ENCODE measurements at regions of chr6 and their contacts with region 1.

Region 1: DNA sequence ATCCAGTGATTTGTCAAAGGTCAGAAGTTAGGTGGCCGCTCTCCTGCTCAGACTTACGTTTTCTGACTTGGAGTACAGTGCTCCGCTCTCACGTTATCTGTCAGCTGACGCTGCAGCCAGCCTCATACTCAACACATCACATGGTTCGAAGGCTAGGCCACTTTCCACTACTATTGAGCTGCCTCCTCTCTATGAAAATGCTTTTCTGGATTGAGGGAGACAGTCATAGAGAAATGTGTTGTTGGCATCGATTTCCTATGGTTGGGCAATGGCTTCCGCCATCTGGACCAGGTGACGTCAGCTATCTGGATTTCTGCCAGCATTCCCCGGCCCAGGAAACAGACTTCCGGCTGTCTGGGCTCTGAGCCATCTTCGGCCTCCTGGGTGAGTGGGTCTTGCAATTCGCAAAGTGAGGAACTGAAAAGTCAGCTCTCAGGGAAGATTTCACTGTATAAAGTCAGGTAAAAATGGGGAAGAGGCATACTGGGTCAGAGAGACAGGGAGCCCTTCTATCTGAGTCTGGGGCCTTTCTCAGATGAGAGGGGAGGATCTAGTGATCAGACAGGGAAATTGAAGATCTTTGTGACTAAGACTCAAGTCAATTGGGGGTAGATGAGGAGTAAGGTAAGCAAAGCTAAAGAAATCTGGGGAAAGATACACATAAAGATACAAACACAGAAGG is 37.5 kb upstream of the IER3 start:
- DNase-seq: peak; percentile 88 to 97 (median 91)
- ATAC-seq: peak; percentile 79
- H3K4me3 ChIP-seq: peak overlapping the region; percentile 21
- H3K27ac ChIP-seq: peak overlapping the region; percentile 91
- H3K4me1 ChIP-seq: peaks cover 45 to 54% of the 10 kb centered on the region in 2 experiments
- H3K27me3 ChIP-seq: no peaks in the 10 kb centered on the region
- CTCF ChIP-seq: no peak
- EP300 ChIP-seq: peak; percentile 88
- POLR2A ChIP-seq: peak; percentile 78
- RAD21 ChIP-seq: peak; percentile 3 to 31; a peak in 1 of 4 replicates

Region 2: DNA sequence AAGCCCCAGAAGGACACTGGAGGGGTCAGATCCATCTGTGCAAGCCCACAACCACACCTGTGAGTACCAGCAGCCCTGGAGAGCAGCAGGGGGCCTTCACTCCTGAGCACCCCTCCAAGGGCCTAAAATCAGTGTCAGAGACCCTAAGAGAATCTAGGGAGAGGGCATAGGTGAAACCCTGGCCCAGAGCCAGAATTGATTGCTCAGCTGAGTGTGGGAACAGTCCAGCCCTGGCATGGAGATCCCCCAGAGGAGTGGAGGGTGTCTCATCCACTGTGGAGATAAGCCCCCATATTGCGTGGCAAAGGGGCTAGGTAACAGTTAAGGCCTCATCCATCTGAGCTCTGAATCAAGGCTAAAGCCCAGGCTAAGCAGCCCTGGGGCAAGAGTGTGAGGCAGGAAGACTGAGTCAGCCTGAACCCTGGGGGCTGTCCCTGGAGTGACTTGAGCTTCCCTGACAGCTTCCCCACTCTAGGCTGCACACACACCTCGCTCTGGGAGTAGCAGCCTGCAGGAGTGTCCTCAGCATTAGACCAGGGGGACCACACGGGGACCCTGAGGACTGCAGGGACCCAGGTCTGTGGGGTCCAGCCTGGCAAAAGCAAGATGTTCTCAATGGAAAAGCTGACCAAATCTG is 1250.3 kb before region 1 on chr6:
- CTCF ChIA-PET with region 1: no interaction called
- POLR2A ChIA-PET with region 1: no interaction called
- in situ Hi-C with region 1: no loop called
- intact Hi-C with region 1: no loop called
- DNase-seq: no peak
- ATAC-seq: no peak
- H3K4me3 ChIP-seq: no peak overlapping the region
- H3K27ac ChIP-seq: no peak overlapping the region
- H3K4me1 ChIP-seq: no peaks in the 10 kb centered on the region; a peak in 1 of 5 replicates
- H3K27me3 ChIP-seq: peaks cover 0 to 13% of the 10 kb centered on the region in 2 experiments; a peak in 3 of 5 replicates
- CTCF ChIP-seq: no peak
- EP300 ChIP-seq: no peak
- POLR2A ChIP-seq: no peak
- RAD21 ChIP-seq: no peak

Region 3: DNA sequence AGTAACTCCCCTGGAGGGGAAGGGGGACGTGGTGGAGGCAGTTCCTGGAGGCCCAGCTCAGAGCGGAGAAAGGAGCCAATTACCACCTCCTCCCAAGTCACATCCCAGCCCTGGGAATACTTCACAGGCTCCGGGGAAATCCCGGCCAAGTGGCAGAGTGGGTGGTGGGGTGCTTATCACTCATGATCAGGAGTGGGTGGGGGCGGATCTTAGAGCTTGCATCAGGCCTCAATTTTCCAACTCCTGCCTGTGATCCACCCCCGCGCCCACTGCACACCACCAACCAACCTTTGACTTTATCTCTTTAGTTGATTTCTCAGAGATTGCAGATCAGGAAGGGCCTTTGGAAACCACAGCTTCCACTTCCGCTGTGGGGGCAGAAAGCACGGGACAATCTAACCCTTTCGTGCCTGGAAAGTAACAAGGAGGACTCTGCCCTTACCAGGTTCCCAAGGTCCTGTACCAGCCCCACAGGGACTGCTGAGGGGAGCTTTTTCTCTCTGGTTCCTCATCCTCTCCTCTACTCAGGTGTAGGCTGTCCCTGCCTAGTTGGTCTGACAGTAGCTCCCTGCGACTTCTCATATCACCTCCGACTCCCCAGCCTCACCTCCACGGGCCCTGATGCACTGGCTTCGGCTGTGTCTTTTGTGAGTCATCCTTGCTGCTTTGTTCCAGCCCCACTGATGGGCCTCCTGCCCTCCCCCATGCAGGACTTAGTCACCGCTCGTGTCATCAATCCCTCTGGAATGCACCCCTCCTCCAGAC is 12.6 kb before region 1 on chr6:
- CTCF ChIA-PET with region 1: no interaction called
- POLR2A ChIA-PET with region 1: interaction called, 19 read pairs
- in situ Hi-C with region 1: no loop called
- intact Hi-C with region 1: no loop called
- DNase-seq: peak; percentile 90 to 93 (median 92)
- ATAC-seq: peak; percentile 90
- H3K4me3 ChIP-seq: peak overlapping the region; percentile 16; the same call in 1 of the 2 replicates
- H3K27ac ChIP-seq: peak overlapping the region; percentile 92
- H3K4me1 ChIP-seq: peaks cover 36 to 49% of the 10 kb centered on the region in 2 experiments
- H3K27me3 ChIP-seq: no peaks in the 10 kb centered on the region; a peak in 1 of 5 replicates
- CTCF ChIP-seq: no peak
- EP300 ChIP-seq: peak; percentile 88
- POLR2A ChIP-seq: no peak; the same call in 1 of the 2 replicates
- RAD21 ChIP-seq: peak; percentile 16 to 39

Region 4: GRCh38 chr6:30793521-30794194 is 11.8 kb after region 1 on chr6:
- CTCF ChIA-PET with region 1: no interaction called
- POLR2A ChIA-PET with region 1: interaction called, 16 read pairs
- in situ Hi-C with region 1: no loop called
- intact Hi-C with region 1: no loop called
- DNase-seq: no peak
- ATAC-seq: peak; percentile 44
- H3K4me3 ChIP-seq: no peak overlapping the region
- H3K27ac ChIP-seq: peak overlapping the region; percentile 66
- H3K4me1 ChIP-seq: peaks cover 5 to 27% of the 10 kb centered on the region in 2 experiments
- H3K27me3 ChIP-seq: no peaks in the 10 kb centered on the region
- CTCF ChIP-seq: no peak
- EP300 ChIP-seq: no peak
- POLR2A ChIP-seq: no peak
- RAD21 ChIP-seq: no peak

Region 5: DNA sequence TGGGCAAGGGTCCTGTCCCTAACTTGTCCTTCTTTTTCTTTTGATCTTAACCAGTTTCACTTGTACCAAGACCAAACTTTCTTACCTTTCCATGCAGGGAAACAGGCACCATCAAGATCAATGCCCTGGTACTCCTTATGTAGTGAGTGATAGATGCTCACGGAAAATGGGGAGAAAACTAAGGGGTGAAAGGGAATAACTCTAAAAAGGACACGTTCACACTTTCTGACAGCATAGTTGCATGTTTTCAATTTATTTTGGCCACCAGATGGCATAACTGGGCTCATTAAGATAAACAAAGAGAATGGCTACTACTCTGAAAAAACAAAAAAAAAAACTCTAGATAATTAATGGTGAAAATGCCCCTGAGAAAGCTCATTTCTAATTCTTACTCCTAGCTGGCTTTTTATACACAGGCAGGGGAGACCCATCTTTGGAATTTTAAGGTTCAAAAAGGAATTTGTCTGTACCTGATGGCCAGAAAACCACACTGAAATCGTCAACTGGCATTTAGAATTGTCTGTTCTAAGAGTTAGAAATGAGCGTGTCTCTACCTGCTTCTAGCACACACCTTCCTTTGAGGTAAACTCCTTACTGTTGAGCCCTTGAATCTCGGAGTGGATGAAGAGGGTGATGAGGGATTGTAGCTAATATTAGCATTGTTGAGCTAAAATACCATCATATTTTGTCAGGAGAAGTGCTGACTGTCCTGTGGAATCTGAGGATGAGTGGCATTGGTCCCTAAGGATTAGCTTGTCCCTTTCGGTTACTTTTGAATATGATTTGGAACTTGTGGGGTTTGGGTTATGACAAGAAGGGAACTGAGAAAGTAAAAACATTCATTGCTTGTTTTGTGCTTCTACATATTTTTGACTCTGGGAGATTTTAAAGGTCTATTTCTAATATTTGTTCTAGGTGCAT is 40.2 kb after region 1 on chr6:
- CTCF ChIA-PET with region 1: no interaction called
- POLR2A ChIA-PET with region 1: interaction called, 3 read pairs
- in situ Hi-C with region 1: no loop called
- intact Hi-C with region 1: loop called (anchors 5 kb)
- DNase-seq: peak; percentile 51 to 84 (median 59)
- ATAC-seq: peak; percentile 76
- H3K4me3 ChIP-seq: no peak overlapping the region
- H3K27ac ChIP-seq: peak overlapping the region; percentile 20; the same call in 2 of the 3 replicates
- H3K4me1 ChIP-seq: peaks cover 15 to 36% of the 10 kb centered on the region in 2 experiments
- H3K27me3 ChIP-seq: no peaks in the 10 kb centered on the region
- CTCF ChIP-seq: peak; percentile 51 to 84 (median 70); a peak in 5 of 6 replicates
- EP300 ChIP-seq: 0 out of 2 replicates have a peak, but pooled peaks have one; percentile 13
- POLR2A ChIP-seq: no peak
- RAD21 ChIP-seq: peak; percentile 69 to 72